Cardiac septum (tissue), 1 donor: ENCODE measurements at regions of chr19 and their contacts with region 1.

Region 1: DNA sequence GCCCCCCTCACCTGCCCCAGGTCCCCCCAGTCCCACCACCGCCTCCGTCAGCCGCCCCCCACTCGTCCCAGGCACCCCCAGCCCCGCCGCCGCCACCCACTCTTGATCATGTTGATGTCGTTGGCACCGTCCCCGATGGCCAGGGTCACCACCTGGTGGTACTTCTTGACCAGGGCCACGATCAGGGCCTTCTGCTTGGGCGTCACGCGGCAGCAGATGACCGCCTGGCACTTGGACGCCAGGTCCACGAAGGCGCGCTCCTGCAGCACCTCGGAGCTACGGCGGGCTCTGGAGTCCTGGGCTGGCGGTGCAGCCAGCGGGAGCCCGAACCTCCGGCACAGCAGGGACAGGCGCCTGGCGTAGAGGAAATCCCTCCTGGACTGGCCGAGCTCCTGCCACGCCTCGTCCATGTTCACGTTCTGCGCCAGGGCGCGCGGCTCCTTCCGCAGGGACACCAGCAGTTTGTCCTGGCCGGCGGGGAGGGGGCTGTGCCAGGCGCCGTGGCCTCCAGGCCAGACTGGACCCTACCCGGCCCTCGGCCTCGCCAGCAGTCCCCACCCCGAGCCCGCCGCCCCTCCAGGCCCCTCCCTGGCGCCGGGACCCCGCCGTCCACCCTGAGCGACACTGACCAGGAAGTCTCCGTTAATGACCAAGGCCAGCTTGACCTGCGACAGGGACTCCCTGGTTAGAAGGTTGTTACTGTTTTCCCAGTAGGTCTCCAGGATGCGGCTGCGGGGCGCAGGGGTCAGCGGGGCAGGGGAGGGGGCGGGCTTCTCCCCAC is 22.6 kb downstream of the ATP8B3 start:
- DNase-seq: no peak

Region 2: GRCh38 chr19:1540365-1540925 is 249.0 kb before region 1 on chr19:
- intact Hi-C with region 1: loop called (anchors 10 kb)
- DNase-seq: no peak

Region 3: GRCh38 chr19:1807722-1808397 is 18.4 kb after region 1 on chr19:
- intact Hi-C with region 1: no loop called
- DNase-seq: no peak